ENCODE measurements at regions of chr6 and their contacts with region 1.

Region 1: GRCh38 chr6:135675862-135676261 is 175.6 kb upstream of the PDE7B start:
- DNase-seq: peak; percentile 45
- H3K4me3 Mint-ChIP-seq: no peak overlapping the region
- H3K27ac Mint-ChIP-seq: peak overlapping the region; percentile 42
- H3K4me1 Mint-ChIP-seq: peaks cover 1% of the 10 kb centered on the region
- H3K27me3 Mint-ChIP-seq: no peaks in the 10 kb centered on the region
- CTCF ChIP-seq: no peak

Region 2: GRCh38 chr6:135759831-135760230 is 84.0 kb after region 1 on chr6:
- CTCF ChIA-PET with region 1: no interaction called
- intact Hi-C with region 1: loop called (anchors 1 kb)
- DNase-seq: peak; percentile 26
- H3K4me3 Mint-ChIP-seq: no peak overlapping the region
- H3K27ac Mint-ChIP-seq: no peak overlapping the region
- H3K4me1 Mint-ChIP-seq: no peaks in the 10 kb centered on the region
- H3K27me3 Mint-ChIP-seq: no peaks in the 10 kb centered on the region
- CTCF ChIP-seq: peak; percentile 22